GM12878 (cell line): ENCODE measurements at regions of chr2 and their contacts with region 1.

Region 1: GRCh38 chr2:45650851-45651414 is 542 bp upstream of the PRKCE start:
- DNase-seq: peak; percentile 76
- ATAC-seq: peak; percentile 79
- H3K4me3 ChIP-seq: peak overlapping the region; percentile 97
- H3K27ac ChIP-seq: peak overlapping the region; percentile 91
- H3K4me1 ChIP-seq: no peaks in the 10 kb centered on the region
- H3K27me3 ChIP-seq: no peaks in the 10 kb centered on the region
- CTCF ChIP-seq: peak; percentile 38 to 49 (median 48); a peak in 5 of 6 replicates
- EP300 ChIP-seq: peak; percentile 56 to 69; a peak in 1 of 4 replicates
- POLR2A ChIP-seq: peak; percentile 85
- RAD21 ChIP-seq: peak; percentile 57

Region 2: DNA sequence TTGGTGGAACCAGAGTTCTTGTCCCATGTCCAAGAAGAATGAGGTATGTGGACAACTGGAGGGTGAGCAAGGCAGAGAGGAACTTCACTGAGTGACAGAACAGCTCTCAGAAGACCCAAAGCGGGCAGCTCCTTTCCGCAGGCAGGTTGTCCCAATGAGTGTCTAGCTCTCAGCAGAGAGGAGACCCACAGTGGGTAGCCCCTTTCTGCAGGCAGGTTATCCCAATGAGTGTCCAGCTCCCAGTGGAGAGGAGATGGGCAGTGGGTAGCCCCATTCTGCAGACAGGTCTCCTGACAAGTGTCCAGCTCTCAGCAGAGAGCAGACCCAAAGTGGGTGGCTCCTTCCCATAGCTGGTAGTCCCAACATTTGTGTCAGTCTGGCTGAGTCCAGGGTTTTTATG is 109.5 kb before region 1 on chr2:
- CTCF ChIA-PET with region 1: no interaction called
- POLR2A ChIA-PET with region 1: no interaction called
- RAD21 ChIA-PET with region 1: no interaction called
- SMC1A ChIA-PET with region 1: no interaction called
- in situ Hi-C with region 1: no loop called
- intact Hi-C with region 1: no loop called
- DNase-seq: no peak
- ATAC-seq: no peak
- H3K4me3 ChIP-seq: no peak overlapping the region
- H3K27ac ChIP-seq: no peak overlapping the region
- H3K4me1 ChIP-seq: no peaks in the 10 kb centered on the region
- H3K27me3 ChIP-seq: no peaks in the 10 kb centered on the region
- CTCF ChIP-seq: no peak
- EP300 ChIP-seq: no peak
- POLR2A ChIP-seq: no peak
- RAD21 ChIP-seq: no peak

Region 3: DNA sequence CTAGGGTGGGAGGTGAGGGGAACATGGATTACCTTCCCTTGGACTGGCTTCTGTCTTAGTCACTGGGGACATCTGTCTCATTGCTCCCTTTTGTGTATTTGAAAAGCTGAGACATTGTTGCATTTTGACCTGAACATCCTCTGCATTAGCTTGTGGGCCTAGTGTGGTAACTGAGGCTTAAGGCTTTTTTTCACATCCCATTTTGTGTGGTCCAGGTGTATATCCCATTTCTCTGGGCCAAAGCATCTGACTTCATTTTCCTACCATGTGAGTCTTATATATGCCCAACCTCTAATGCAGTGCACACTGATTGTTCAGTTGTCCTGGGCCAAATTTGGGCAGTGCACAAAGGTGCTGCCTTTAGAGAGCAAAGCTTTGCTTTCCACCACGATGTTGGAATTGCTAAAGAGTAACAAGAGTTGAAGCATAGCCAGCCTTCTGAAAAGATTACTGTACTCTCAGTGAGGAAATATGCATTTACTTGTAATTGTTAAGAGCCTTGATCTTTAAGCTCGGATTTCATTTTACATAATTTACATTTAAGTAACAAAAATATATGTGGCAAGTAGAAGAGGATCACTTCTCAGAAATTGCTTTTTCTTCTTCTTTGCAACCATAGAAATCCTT is 13.8 kb after region 1 on chr2:
- CTCF ChIA-PET with region 1: interaction called, 6 read pairs
- POLR2A ChIA-PET with region 1: interaction called, 8 read pairs
- RAD21 ChIA-PET with region 1: interaction called, 9 read pairs
- SMC1A ChIA-PET with region 1: interaction called, 33 read pairs
- in situ Hi-C with region 1: no loop called
- intact Hi-C with region 1: no loop called
- DNase-seq: peak; percentile 37
- ATAC-seq: peak; percentile 79
- H3K4me3 ChIP-seq: no peak overlapping the region
- H3K27ac ChIP-seq: no peak overlapping the region
- H3K4me1 ChIP-seq: peaks cover 6% of the 10 kb centered on the region; the same call in 1 of the 2 replicates
- H3K27me3 ChIP-seq: no peaks in the 10 kb centered on the region
- CTCF ChIP-seq: no peak
- EP300 ChIP-seq: no peak; a peak in 1 of 4 replicates
- POLR2A ChIP-seq: no peak
- RAD21 ChIP-seq: no peak

Region 4: DNA sequence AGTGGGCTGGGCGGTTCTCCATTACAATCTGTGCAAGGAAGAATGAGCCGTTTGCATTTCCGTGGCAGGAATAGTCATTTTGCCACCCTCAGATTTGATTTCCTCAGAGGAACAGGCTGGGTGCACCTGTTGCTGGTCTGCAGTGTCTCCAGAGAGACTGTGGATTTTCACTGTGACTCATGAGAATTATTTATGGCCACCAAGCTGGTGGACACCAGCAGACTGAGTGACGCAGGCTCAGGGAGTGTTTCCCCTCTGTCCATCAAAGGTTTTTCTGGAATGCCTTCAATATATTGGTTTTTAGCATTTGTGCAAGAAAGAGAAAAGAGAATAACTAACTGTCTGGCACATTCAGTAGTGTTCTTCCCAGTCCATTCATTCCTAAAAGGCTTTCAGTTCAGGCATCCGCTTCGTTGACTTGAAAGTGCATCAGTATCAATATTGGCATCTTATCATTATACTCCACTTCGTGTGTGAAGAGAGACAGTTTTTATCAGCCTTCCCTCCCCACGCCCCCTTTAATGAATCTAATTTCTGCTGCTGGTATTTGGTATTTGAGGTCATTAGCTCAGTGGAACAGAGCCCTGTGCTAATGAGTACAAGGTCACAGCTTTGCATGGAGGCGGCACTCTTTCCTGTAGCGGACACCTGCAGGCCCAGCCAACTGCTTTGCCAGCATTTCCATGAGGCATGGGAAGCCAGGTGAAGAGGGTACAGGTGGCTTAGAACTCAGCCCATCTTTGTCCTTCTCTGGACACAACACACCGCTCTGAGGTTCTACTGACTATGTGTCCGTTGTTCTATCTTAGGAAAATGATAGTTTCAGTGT is 40.5 kb after region 1 on chr2:
- CTCF ChIA-PET with region 1: interaction called, 6 read pairs
- POLR2A ChIA-PET with region 1: interaction called, 14 read pairs
- RAD21 ChIA-PET with region 1: interaction called, 35 read pairs
- SMC1A ChIA-PET with region 1: interaction called, 24 read pairs
- in situ Hi-C with region 1: no loop called
- intact Hi-C with region 1: loop called (anchors 5 kb)
- DNase-seq: peak; percentile 52
- ATAC-seq: peak; percentile 84
- H3K4me3 ChIP-seq: peak overlapping the region; percentile 54
- H3K27ac ChIP-seq: peak overlapping the region; percentile 61
- H3K4me1 ChIP-seq: peaks cover 41% of the 10 kb centered on the region
- H3K27me3 ChIP-seq: no peaks in the 10 kb centered on the region
- CTCF ChIP-seq: no peak
- EP300 ChIP-seq: peak; percentile 79 to 89
- POLR2A ChIP-seq: no peak
- RAD21 ChIP-seq: no peak

Region 5: DNA sequence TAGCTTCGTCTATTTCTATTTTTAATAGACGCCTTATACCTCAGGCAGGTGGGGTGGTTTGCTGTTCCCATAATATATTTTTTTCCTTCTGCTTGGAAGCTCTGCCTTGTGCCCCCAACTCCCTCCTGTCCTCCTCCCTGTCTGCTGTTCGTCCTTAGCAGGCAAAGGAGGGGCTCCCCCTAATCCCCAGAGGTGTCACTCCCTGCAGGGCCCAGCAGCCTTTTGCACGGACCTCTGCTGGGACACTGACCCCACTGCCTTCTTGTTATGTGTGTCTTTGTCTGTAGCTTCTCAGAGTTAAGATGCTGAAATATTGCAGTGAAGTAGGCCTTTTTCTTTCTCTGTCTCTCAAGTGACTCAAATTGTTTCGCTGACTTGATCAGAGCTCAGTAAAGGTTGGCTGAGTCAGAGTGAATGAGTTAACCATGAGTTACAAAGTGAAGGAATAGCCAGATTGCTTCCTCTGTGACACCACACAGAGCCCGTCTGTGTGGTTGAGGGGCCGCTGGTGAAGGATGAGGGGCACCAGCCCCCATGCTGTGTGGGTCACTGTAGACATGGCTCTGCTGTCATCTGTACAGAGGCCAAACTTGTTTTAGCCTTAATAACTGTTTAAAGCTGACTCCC is 48.2 kb after region 1 on chr2:
- CTCF ChIA-PET with region 1: interaction called, 6 read pairs
- POLR2A ChIA-PET with region 1: interaction called, 4 read pairs
- RAD21 ChIA-PET with region 1: interaction called, 35 read pairs
- SMC1A ChIA-PET with region 1: interaction called, 24 read pairs
- in situ Hi-C with region 1: no loop called
- intact Hi-C with region 1: loop called (anchors 5 kb)
- DNase-seq: no peak
- ATAC-seq: peak; percentile 64
- H3K4me3 ChIP-seq: no peak overlapping the region
- H3K27ac ChIP-seq: peak overlapping the region; percentile 17
- H3K4me1 ChIP-seq: peaks cover 35% of the 10 kb centered on the region
- H3K27me3 ChIP-seq: no peaks in the 10 kb centered on the region
- CTCF ChIP-seq: no peak
- EP300 ChIP-seq: no peak
- POLR2A ChIP-seq: no peak
- RAD21 ChIP-seq: no peak

Region 6: GRCh38 chr2:45874344-45874743 is 223.4 kb after region 1 on chr2:
- CTCF ChIA-PET with region 1: no interaction called
- POLR2A ChIA-PET with region 1: no interaction called
- RAD21 ChIA-PET with region 1: no interaction called
- SMC1A ChIA-PET with region 1: no interaction called
- in situ Hi-C with region 1: no loop called
- intact Hi-C with region 1: no loop called
- DNase-seq: no peak
- ATAC-seq: no peak
- H3K4me3 ChIP-seq: no peak overlapping the region
- H3K27ac ChIP-seq: no peak overlapping the region
- H3K4me1 ChIP-seq: peaks cover 9% of the 10 kb centered on the region
- H3K27me3 ChIP-seq: no peaks in the 10 kb centered on the region
- CTCF ChIP-seq: no peak
- EP300 ChIP-seq: no peak
- POLR2A ChIP-seq: no peak
- RAD21 ChIP-seq: no peak